ENCODE measurements at regions of chrX and their contacts with region 1.

Region 1: DNA sequence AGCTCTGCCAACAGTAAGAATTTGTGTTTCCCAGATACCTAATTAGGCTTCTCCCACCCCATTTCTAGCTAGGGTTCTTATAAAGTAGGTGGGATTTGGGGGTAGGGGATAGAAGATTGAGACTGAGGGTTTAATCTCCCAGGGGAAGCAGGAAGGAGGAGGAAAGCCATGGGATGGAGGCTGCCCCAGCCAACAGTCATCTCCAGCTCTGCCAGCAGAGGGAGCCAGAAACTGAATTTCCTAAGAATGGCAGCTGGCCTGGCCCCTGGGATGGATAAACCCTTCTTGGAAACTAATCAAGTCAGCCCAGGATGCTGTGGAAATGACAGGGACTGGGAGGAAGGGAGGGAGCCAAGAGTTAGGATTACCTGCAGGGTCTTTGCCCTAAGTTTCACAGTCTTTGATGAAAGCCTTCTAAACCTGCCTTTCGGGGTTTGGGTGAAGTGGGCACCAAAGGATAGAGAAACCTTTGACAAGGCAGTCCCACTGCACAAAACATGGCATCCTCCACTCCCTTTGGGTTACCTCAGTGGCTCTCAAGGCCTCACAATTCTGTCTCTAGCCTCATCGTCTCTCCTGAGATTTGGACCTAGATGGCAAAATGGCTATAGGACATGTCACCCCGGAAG is 6.7 kb upstream of the ERCC6L start:
- DNase-seq: peak; percentile 78
- ATAC-seq: peak; percentile 82
- H3K4me3 ChIP-seq: no peak overlapping the region
- H3K27ac ChIP-seq: no peak overlapping the region
- H3K4me1 ChIP-seq: peaks cover 8% of the 10 kb centered on the region
- H3K27me3 ChIP-seq: no peaks in the 10 kb centered on the region
- CTCF ChIP-seq: peak; percentile 87

Region 2: GRCh38 chrX:72306851-72307645 is 61.5 kb after region 1 on chrX:
- CTCF ChIA-PET with region 1: no interaction called
- POLR2A ChIA-PET with region 1: no interaction called
- intact Hi-C with region 1: loop called (anchors 5 kb)
- DNase-seq: peak; percentile 71
- ATAC-seq: peak; percentile 73
- H3K4me3 ChIP-seq: peak overlapping the region; percentile 71
- H3K27ac ChIP-seq: no peak overlapping the region
- H3K4me1 ChIP-seq: peaks cover 10% of the 10 kb centered on the region
- H3K27me3 ChIP-seq: peaks cover 24% of the 10 kb centered on the region
- CTCF ChIP-seq: no peak

Region 3: GRCh38 chrX:72540318-72540717 is 294.7 kb after region 1 on chrX:
- CTCF ChIA-PET with region 1: no interaction called
- POLR2A ChIA-PET with region 1: no interaction called
- intact Hi-C with region 1: loop called (anchors 2 kb)
- DNase-seq: peak; percentile 44
- ATAC-seq: no peak
- H3K4me3 ChIP-seq: no peak overlapping the region
- H3K27ac ChIP-seq: no peak overlapping the region
- H3K4me1 ChIP-seq: no peaks in the 10 kb centered on the region
- H3K27me3 ChIP-seq: no peaks in the 10 kb centered on the region
- CTCF ChIP-seq: peak; percentile 56

Measured in PC-3 (cell line).